Activated CD4-positive, alpha-beta memory T cell treated with anti-CD3 and anti-CD28 coated beads, Interleukin-2, amount 10 ng/mL, durations not matched to agents 7 days and 5 days (primary cell): ENCODE measurements at regions of chr6 and their contacts with region 1.

Region 1: DNA sequence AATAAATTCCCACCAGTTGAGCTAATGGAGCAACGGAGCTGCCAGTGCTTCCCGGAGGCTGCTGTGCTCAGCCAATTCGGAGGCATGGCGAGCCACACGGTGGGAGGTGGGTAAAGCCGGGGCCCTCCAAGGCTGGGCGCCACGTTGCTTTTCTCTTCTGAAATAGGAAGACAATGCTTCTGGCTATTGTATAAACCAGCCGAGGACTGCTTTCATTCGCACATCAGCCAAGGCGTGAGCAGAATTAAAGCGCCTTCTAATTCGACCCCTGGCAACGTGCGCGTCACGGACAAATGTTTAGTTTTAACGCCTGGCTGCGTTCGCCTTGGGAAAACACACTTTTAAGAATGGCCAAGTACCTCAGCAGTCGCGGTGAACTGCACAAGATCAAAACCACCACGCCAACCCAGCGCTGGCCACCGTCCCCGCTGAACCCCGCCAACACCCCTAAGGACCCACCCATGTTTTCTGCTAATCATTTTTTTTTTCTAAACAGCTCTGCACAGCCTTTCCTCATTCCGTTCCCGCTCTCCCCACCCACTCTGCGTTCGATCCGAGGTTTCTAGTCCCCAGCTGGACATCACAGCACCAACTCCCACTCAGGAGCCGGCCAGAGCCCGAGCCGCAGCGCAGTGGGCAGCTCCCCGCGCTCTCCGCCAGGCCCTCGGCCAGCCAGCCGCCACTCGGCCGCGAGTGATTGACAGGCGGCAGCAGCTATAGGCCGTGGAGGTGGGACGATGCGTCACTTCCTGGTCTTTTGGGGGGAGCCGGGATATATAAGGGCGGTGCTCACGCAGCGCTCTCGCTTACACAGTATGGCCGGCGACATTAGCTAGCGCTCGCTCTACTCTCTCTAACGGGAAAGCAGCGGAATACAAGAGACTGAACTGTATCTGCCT is at the start of gene AMD1:
- DNase-seq: peak; percentile 94
- H3K4me3 Mint-ChIP-seq: peak within 1 kb of the TSS; percentile 90
- H3K27ac Mint-ChIP-seq: peak within 1 kb of the TSS; percentile 95
- H3K4me1 Mint-ChIP-seq: peaks cover 27% of the 10 kb centered on the region
- H3K27me3 Mint-ChIP-seq: no peaks in the 10 kb centered on the region
- total RNA-seq, gene AMD1: 71.0 to 73.2 TPM

Region 2: GRCh38 chr6:110529355-110529754 is 344.9 kb before region 1 on chr6:
- CTCF ChIA-PET with region 1: interaction called, 4 read pairs
- POLR2A ChIA-PET with region 1: interaction called, 11 read pairs
- DNase-seq: no peak
- H3K4me3 Mint-ChIP-seq: no peak overlapping the region
- H3K27ac Mint-ChIP-seq: no peak overlapping the region
- H3K4me1 Mint-ChIP-seq: peaks cover 33% of the 10 kb centered on the region
- H3K27me3 Mint-ChIP-seq: no peaks in the 10 kb centered on the region

Region 3: DNA sequence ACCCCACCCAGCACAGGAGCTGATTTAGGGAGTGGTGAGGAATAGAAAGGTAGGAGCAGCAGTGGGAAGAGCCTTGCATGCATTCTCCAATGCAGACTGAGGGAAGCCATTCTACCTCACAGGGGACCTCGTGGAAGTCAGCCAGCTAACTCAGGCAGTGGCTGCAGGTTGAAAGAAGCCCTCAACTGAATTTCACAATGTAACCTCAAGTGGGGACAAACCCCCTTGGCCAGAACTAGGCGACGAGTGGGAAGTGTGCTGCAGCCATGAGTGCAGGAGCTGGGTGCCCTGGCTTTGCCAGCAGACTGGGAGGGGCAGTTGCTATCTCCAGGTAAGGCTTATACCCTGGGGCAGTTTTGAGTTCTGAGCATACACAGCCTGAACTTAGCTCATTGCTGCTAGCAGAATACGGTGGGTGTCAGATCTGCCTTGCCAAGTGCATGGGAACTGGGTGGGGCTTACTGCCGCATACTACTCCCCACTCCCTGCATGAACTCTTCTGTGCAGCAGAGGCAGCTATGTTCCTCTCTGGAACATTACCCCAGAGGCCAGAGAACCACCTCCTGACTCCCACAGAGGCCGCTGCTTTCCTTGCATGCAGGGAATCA is 185.5 kb before region 1 on chr6:
- CTCF ChIA-PET with region 1: interaction called, 67 read pairs
- POLR2A ChIA-PET with region 1: interaction called, 24 read pairs
- DNase-seq: no peak
- H3K4me3 Mint-ChIP-seq: no peak overlapping the region
- H3K27ac Mint-ChIP-seq: no peak overlapping the region
- H3K4me1 Mint-ChIP-seq: peaks cover 26% of the 10 kb centered on the region
- H3K27me3 Mint-ChIP-seq: no peaks in the 10 kb centered on the region

Region 4: GRCh38 chr6:110856296-110856695 is 17.9 kb before region 1 on chr6:
- CTCF ChIA-PET with region 1: no interaction called
- POLR2A ChIA-PET with region 1: interaction called, 77 read pairs
- DNase-seq: no peak
- H3K4me3 Mint-ChIP-seq: no peak overlapping the region
- H3K27ac Mint-ChIP-seq: no peak overlapping the region
- H3K4me1 Mint-ChIP-seq: peaks cover 12% of the 10 kb centered on the region
- H3K27me3 Mint-ChIP-seq: peaks cover 2% of the 10 kb centered on the region

Region 5: DNA sequence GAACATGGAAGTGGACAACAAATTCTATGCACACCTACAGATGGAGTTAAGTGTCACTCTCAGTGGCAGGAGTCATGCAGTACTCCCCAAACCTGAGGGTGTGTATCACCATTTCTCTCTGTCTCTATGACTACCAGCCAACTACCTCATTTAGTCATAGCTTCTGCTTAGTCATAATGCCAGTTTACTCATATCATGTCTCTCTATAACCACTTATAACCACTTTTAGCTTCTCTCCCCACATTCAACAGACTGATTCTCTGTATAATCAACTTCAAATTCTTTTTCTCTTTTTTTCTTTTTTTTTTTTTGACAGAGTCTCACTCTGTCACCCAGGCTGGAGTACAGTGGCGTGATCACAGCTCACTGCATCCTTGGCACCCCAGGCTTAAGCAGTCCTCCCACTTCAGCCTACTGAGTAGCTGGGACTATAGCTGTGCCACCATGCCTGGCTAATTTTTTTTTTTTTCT is 70.5 kb after region 1 on chr6:
- CTCF ChIA-PET with region 1: interaction called, 8 read pairs
- POLR2A ChIA-PET with region 1: interaction called, 91 read pairs
- DNase-seq: peak; percentile 55
- H3K4me3 Mint-ChIP-seq: no peak overlapping the region
- H3K27ac Mint-ChIP-seq: peak overlapping the region; percentile 75
- H3K4me1 Mint-ChIP-seq: peaks cover 13% of the 10 kb centered on the region
- H3K27me3 Mint-ChIP-seq: no peaks in the 10 kb centered on the region

Region 6: DNA sequence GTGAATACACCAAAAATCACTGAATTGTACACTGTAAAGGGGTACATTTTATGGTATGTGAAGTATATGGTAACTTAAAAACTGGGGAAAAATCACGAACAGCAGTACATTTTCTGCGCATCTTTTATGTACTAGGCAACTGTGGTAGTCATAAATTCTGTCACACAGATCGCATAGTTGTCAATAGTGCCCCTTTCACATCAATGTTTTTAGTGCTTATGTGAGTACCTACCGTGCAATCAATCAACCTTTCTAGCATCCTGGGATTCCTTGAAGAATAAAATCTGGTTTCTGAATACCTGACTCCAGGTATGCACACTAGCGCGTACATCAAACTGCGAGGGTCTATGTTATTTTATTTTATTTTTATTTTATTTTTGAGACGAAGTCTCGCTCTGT is 107.0 kb after region 1 on chr6:
- CTCF ChIA-PET with region 1: no interaction called
- POLR2A ChIA-PET with region 1: interaction called, 53 read pairs
- DNase-seq: no peak
- H3K4me3 Mint-ChIP-seq: peak overlapping the region; percentile 99
- H3K27ac Mint-ChIP-seq: peak overlapping the region; percentile 97
- H3K4me1 Mint-ChIP-seq: peaks cover 54% of the 10 kb centered on the region
- H3K27me3 Mint-ChIP-seq: no peaks in the 10 kb centered on the region